HEK293 (cell line): ENCODE measurements at regions of chr1 and their contacts with region 1.

Region 1: GRCh38 chr1:226940029-226940805 is at the start of gene COQ8A:
- H3K4me3 ChIP-seq: peak within 1 kb of the TSS; percentile 73
- H3K27ac ChIP-seq: peak within 1 kb of the TSS; percentile 85
- H3K4me1 ChIP-seq: peaks cover 14% of the 10 kb centered on the region
- CTCF ChIP-seq: peak; percentile 60

Region 2: DNA sequence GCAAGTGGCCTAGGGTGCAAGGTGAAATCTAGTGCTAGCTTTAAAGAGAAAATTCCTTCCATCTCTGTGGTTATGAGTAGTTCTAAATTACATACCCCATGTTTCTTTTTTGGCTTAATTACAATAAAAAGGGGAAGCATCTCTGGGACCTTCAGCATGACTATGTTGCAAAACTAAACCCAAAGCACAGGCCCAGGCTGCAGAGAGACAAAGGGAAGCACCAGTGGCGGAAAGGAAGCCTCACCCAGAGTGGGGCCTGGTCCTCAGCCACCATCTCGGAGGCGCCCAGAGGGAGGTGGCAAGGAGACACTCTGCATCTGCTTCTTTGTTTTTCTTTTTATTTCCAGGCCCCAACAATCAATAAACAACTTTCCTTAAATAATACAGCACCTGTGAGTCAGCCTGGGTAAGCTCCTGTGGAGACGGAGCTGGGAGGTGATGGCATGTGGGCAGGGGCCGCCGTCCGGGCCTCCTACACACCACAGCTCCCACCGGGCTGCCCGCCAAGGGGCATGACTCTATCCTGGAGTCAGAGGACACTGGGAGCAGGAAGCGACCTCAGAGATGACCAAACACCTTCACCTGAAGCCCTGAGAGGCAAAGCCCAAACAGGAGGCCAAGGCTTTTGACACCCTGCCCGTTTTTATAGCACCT is 222.8 kb before region 1 on chr1:
- CTCF ChIA-PET with region 1: no interaction called
- POLR2A ChIA-PET with region 1: interaction called, 12 read pairs
- H3K4me3 ChIP-seq: no peak overlapping the region
- H3K27ac ChIP-seq: no peak overlapping the region
- H3K4me1 ChIP-seq: peaks cover 13% of the 10 kb centered on the region
- CTCF ChIP-seq: no peak

Region 3: DNA sequence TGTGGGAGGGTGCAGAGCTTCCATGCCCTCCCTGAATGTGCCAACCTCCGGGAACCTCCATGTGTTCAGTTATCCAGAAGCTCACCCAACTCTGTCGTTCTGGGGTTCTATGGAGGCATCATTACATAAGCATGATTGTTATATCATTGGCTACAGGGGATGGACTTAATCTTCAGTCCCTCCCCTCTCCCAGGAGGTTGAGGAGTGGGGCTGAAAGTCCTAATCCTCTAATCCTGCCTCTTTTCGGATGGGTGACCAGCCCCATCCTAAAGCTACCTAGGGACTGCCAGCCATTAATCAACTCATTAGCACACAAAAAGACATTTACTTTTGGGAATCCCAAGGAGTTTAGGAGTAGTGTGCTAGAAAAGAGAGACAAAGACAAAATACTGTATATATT is 101.8 kb before region 1 on chr1:
- CTCF ChIA-PET with region 1: no interaction called
- POLR2A ChIA-PET with region 1: no interaction called
- H3K4me3 ChIP-seq: no peak overlapping the region
- H3K27ac ChIP-seq: no peak overlapping the region
- H3K4me1 ChIP-seq: no peaks in the 10 kb centered on the region
- CTCF ChIP-seq: no peak

Region 4: DNA sequence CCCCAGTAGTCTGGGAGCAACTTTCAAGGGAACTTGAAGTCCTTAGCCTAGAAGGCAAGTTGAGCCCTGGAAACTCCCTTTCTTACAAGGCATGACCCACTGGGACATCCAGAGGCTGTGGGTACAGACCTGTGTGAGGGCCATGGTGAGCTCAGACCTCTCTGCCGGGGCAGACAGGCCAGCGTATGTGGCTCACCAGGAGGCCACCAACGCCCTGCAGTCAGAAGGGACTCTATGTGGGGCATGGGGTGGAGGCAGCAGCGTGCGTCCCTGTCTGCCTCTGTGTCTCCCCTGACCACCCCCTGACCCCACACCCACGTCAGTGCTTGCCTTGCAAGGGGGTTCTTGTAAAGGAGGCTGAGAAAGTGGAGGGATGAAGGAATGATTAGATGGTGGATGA is 10.7 kb after region 1 on chr1:
- CTCF ChIA-PET with region 1: interaction called, 3 read pairs
- POLR2A ChIA-PET with region 1: interaction called, 11 read pairs
- H3K4me3 ChIP-seq: no peak overlapping the region
- H3K27ac ChIP-seq: no peak overlapping the region
- H3K4me1 ChIP-seq: no peaks in the 10 kb centered on the region
- CTCF ChIP-seq: no peak